ENCODE measurements at regions of chr1 and their contacts with region 1.

Region 1: GRCh38 chr1:156319664-156320063 is 18.4 kb downstream of the CCT3 start:
- DNase-seq: no peak
- H3K4me3 ChIP-seq: no peak overlapping the region
- H3K27ac ChIP-seq: no peak overlapping the region
- H3K27me3 ChIP-seq: no peaks in the 10 kb centered on the region
- CTCF ChIP-seq: peak; percentile 65

Region 2: GRCh38 chr1:156090822-156091188 is 228.9 kb before region 1 on chr1:
- CTCF ChIA-PET with region 1: interaction called, 15 read pairs
- POLR2A ChIA-PET with region 1: no interaction called
- DNase-seq: peak; percentile 48
- H3K4me3 ChIP-seq: no peak overlapping the region
- H3K27ac ChIP-seq: no peak overlapping the region
- H3K27me3 ChIP-seq: no peaks in the 10 kb centered on the region
- CTCF ChIP-seq: peak; percentile 77

Region 3: GRCh38 chr1:156146020-156146768 is 173.5 kb before region 1 on chr1:
- CTCF ChIA-PET with region 1: interaction called, 20 read pairs
- POLR2A ChIA-PET with region 1: no interaction called
- DNase-seq: peak; percentile 86
- H3K4me3 ChIP-seq: no peak overlapping the region
- H3K27ac ChIP-seq: no peak overlapping the region
- H3K27me3 ChIP-seq: peaks cover 13% of the 10 kb centered on the region
- CTCF ChIP-seq: peak; percentile 64

Region 4: GRCh38 chr1:156282479-156283222 is 37.0 kb before region 1 on chr1 and contains the start of gene SMG5:
- CTCF ChIA-PET with region 1: interaction called, 14 read pairs
- POLR2A ChIA-PET with region 1: interaction called, 7 read pairs
- DNase-seq: peak; percentile 97
- H3K4me3 ChIP-seq: peak within 1 kb of the TSS; percentile 95
- H3K27ac ChIP-seq: peak within 1 kb of the TSS; percentile 68
- H3K27me3 ChIP-seq: no peaks in the 10 kb centered on the region
- CTCF ChIP-seq: no peak
- polyA plus RNA-seq, gene SMG5: 20.8 and 27.8 TPM in 2 replicates

Region 5: GRCh38 chr1:156303241-156303640 is 16.4 kb before region 1 on chr1:
- CTCF ChIA-PET with region 1: interaction called, 11 read pairs
- POLR2A ChIA-PET with region 1: interaction called, 4 read pairs
- DNase-seq: no peak
- H3K4me3 ChIP-seq: no peak overlapping the region
- H3K27ac ChIP-seq: no peak overlapping the region
- H3K27me3 ChIP-seq: no peaks in the 10 kb centered on the region
- CTCF ChIP-seq: no peak

Region 6: DNA sequence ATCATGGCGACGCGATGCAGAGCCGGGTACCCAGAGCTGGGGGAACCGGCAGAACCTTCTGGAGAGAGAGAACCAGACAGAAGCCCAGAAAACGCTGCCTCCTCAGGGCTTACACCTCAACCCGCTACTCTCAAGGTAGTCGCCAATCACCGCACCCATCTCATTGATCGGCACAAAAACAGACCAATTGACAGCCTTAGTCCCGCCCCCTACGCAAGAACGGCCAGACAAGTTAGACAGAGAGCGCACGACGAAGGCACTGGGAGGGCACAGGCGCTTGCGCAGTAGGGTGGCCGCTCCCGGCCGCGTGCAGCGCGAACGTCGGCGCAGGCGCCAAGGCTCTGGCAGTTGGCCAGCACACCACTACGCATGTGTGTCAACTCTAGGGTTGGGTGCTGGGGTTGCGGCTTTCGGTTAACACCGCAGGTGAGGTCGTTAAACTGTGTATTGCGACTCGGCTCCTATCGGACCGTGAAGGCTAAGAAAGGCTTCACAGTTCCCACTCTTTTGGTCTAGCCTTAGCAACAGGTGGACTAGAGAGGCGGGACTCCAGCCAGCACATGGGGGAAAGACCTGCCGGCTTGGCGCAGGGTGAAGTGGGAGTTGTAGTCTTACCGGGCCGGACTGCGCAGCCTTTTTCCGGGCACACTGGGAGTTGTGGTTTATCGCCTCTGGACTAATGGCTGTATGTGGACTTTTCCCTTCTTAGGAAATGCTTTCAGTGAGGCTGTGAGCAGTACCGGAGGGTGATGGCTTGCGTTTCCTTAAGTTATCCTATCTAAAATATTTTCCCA is 18.7 kb after region 1 on chr1 and contains the starts of genes CCT3 and TSACC:
- CTCF ChIA-PET with region 1: interaction called, 31 read pairs
- POLR2A ChIA-PET with region 1: interaction called, 6 read pairs
- DNase-seq: peak; percentile 100
- H3K4me3 ChIP-seq: peak within 1 kb of the TSS; percentile 98
- H3K27ac ChIP-seq: peak within 1 kb of the TSS; percentile 39
- H3K27me3 ChIP-seq: no peaks in the 10 kb centered on the region
- CTCF ChIP-seq: no peak
- polyA plus RNA-seq, gene CCT3: 314 and 359 TPM in 2 replicates
- polyA plus RNA-seq, gene TSACC: 0.27 and 0.48 TPM in 2 replicates

Measured in AG04450 (cell line).